ENCODE measurements at regions of chr15 and their contacts with region 1.

Region 1: DNA sequence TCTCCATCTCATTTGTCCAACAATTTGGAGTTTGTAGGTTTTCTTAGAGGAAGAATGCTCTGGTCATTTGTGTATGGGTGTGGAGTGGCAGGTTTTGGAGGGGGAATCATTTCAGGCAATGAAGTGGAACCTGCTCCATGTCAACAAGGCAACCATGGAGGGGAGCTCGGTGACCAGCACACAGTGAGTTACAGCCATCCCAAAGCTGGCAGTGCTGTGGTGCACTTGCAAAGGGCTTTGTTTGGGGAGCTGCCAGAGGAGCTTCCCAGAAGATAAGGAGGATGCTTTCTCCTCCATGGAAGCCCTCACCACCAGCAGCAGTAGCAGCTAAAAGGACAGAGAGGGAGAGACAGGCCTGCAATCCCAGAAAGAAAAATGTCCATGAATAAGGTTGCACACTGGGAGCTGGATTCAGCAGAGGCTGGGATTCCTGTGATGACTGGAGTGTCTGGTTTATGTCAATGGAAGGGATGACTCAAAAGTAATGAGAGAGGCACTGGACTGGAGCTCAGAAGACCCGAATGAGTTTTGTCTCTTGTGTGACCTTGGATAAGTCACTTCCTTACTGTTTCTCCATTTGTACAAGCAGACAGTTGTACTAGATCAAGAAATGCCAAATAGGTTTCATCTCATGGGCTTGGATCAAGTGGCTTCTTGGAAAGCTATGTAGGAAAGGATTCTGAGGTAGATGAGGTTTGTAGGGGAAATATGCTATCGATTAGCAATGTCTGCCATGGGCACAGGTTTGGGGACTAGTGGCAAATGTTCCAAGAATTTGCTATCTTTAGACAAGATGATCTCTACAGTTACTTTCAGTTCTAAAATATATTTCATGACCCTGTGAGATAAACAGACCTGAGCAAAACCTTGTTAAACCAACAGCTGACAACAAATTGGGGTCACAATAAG is 27.2 kb upstream of the UBE2Q2 start:
- DNase-seq: no peak
- ATAC-seq: peak; percentile 69
- H3K4me3 ChIP-seq: no peak overlapping the region
- H3K27ac ChIP-seq: peak overlapping the region; percentile 44; the same call in 1 of the 3 replicates
- H3K4me1 ChIP-seq: peaks cover 0 to 3% of the 10 kb centered on the region in 2 experiments; a peak in 2 of 5 replicates
- H3K27me3 ChIP-seq: no peaks in the 10 kb centered on the region
- CTCF ChIP-seq: peak in 1 of 3 experiments; percentile 34; a peak in 2 of 6 replicates
- EP300 ChIP-seq: no peak
- POLR2A ChIP-seq: no peak
- RAD21 ChIP-seq: peak in 1 of 2 experiments; percentile 69; a peak in 3 of 4 replicates

Region 2: DNA sequence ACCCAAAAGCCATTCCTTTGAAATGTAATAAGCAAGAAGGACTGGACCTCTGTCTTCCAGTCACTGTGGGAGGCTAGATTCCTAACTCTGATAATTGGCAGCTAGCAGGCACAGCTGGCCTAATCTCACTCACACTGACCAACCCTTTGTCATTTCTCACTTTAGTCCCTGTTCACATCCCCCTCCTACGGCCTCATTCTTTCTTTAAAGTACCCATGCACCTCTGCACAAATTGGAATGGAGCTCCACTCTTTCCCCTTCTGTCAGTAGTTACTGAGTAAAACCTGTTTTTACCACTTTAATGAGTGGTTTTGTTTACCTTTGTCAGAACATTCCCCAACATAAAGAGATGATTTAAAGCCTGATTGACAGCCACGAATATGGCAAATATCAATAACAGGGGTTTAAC is 15.5 kb after region 1 on chr15:
- CTCF ChIA-PET with region 1: no interaction called
- POLR2A ChIA-PET with region 1: interaction called, 10 read pairs
- in situ Hi-C with region 1: no loop called
- intact Hi-C with region 1: no loop called
- DNase-seq: peak in 3 of 4 experiments; percentile 29 to 87 (median 87)
- ATAC-seq: peak; percentile 90
- H3K4me3 ChIP-seq: no peak overlapping the region
- H3K27ac ChIP-seq: peak overlapping the region; percentile 71
- H3K4me1 ChIP-seq: peaks cover 16 to 43% of the 10 kb centered on the region in 2 experiments
- H3K27me3 ChIP-seq: no peaks in the 10 kb centered on the region
- CTCF ChIP-seq: no peak; a peak in 1 of 6 replicates
- EP300 ChIP-seq: peak; percentile 79
- POLR2A ChIP-seq: no peak; the same call in 1 of the 2 replicates
- RAD21 ChIP-seq: no peak